PC-9 (cell line): ENCODE measurements at regions of chr11 and their contacts with region 1.

Region 1: GRCh38 chr11:17077520-17078401 is at the start of gene RPS13:
- DNase-seq: peak; percentile 94 to 97
- H3K4me3 ChIP-seq: peak within 1 kb of the TSS; percentile 99
- H3K27ac ChIP-seq: peak within 1 kb of the TSS; percentile 86
- H3K4me1 ChIP-seq: peaks cover 14% of the 10 kb centered on the region
- H3K27me3 ChIP-seq: no peaks in the 10 kb centered on the region
- CTCF ChIP-seq: no peak
- total RNA-seq, gene RPS13: 828 and 839 TPM in 2 replicates

Region 2: DNA sequence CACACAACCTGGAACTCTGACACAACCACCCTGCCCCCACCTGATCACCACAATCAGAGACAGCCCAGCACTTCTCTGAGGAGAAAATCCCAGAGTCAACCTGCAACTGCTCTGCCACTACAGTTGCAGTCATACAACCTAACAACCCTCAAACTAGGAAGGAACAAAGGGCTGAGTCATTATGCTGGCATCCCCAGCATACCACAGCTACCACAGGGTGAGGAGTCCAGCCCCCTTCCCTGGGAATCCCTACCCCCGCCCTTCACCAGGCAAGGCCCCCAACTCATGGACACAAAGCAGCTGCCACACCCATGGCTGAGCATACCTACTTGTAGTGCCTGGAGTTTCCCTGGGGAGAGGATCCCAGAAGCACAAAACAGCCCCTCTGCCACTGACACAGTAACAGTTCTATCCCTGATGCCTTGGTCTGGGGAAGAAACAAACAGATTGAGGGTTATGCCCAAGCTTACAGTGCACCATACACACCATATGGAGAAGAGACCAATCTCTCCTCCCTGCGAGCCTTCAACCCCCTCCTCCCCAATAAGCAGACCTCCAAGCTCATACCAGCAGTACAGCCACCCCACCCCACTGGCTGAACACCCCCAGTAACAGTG is 407.9 kb before region 1 on chr11:
- CTCF ChIA-PET with region 1: no interaction called
- POLR2A ChIA-PET with region 1: interaction called, 14 read pairs
- intact Hi-C with region 1: no loop called
- DNase-seq: peak; percentile 81 to 82
- H3K4me3 ChIP-seq: no peak overlapping the region
- H3K27ac ChIP-seq: peak overlapping the region; percentile 43
- H3K4me1 ChIP-seq: peaks cover 17% of the 10 kb centered on the region
- H3K27me3 ChIP-seq: no peaks in the 10 kb centered on the region
- CTCF ChIP-seq: no peak

Region 3: GRCh38 chr11:16788141-16789062 is 289.4 kb before region 1 on chr11:
- CTCF ChIA-PET with region 1: no interaction called
- POLR2A ChIA-PET with region 1: no interaction called
- intact Hi-C with region 1: no loop called
- DNase-seq: peak; percentile 64 to 78
- H3K4me3 ChIP-seq: no peak overlapping the region
- H3K27ac ChIP-seq: peak overlapping the region; percentile 58
- H3K4me1 ChIP-seq: peaks cover 48% of the 10 kb centered on the region
- H3K27me3 ChIP-seq: no peaks in the 10 kb centered on the region
- CTCF ChIP-seq: peak; percentile 89

Region 4: GRCh38 chr11:17046690-17047089 is 31.1 kb before region 1 on chr11:
- CTCF ChIA-PET with region 1: no interaction called
- POLR2A ChIA-PET with region 1: no interaction called
- intact Hi-C with region 1: no loop called
- DNase-seq: no peak
- H3K4me3 ChIP-seq: no peak overlapping the region
- H3K27ac ChIP-seq: no peak overlapping the region
- H3K4me1 ChIP-seq: peaks cover 11% of the 10 kb centered on the region
- H3K27me3 ChIP-seq: no peaks in the 10 kb centered on the region
- CTCF ChIP-seq: no peak

Region 5: GRCh38 chr11:17063171-17064002 is 14.4 kb before region 1 on chr11:
- CTCF ChIA-PET with region 1: no interaction called
- POLR2A ChIA-PET with region 1: interaction called, 11 read pairs
- intact Hi-C with region 1: no loop called
- DNase-seq: peak in 1 of 2 experiments; percentile 59
- H3K4me3 ChIP-seq: no peak overlapping the region
- H3K27ac ChIP-seq: no peak overlapping the region
- H3K4me1 ChIP-seq: no peaks in the 10 kb centered on the region
- H3K27me3 ChIP-seq: no peaks in the 10 kb centered on the region
- CTCF ChIP-seq: peak; percentile 86

Region 6: DNA sequence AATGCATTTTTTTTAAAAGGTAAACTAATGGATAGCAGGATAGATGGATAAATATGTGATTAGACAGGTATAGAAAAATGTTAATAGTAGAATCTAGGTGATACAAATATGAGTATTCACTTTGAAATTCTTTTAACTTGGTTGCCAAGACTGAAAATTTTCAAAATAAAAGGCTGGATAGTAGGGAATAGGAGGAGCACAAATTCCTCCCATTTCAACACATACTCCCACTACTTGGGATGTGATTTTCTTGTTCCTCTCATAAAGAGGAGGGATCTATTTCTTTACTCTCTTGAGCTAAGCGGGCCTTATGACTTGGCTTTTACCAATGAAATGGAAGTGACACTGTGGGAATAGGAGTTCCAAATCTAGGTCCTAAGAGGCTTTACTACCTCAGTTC is 94.2 kb after region 1 on chr11:
- CTCF ChIA-PET with region 1: no interaction called
- POLR2A ChIA-PET with region 1: interaction called, 10 read pairs
- intact Hi-C with region 1: no loop called
- DNase-seq: no peak
- H3K4me3 ChIP-seq: no peak overlapping the region
- H3K27ac ChIP-seq: no peak overlapping the region
- H3K4me1 ChIP-seq: peaks cover 13% of the 10 kb centered on the region; the same call in 1 of the 2 replicates
- H3K27me3 ChIP-seq: no peaks in the 10 kb centered on the region
- CTCF ChIP-seq: no peak

Region 7: GRCh38 chr11:17293308-17293707 is 215.5 kb after region 1 on chr11:
- CTCF ChIA-PET with region 1: no interaction called
- POLR2A ChIA-PET with region 1: interaction called, 10 read pairs
- intact Hi-C with region 1: no loop called
- DNase-seq: no peak
- H3K4me3 ChIP-seq: no peak overlapping the region
- H3K27ac ChIP-seq: no peak overlapping the region
- H3K4me1 ChIP-seq: no peaks in the 10 kb centered on the region
- H3K27me3 ChIP-seq: no peaks in the 10 kb centered on the region
- CTCF ChIP-seq: no peak